ENCODE measurements at regions of chr12 and their contacts with region 1.

Region 1: DNA sequence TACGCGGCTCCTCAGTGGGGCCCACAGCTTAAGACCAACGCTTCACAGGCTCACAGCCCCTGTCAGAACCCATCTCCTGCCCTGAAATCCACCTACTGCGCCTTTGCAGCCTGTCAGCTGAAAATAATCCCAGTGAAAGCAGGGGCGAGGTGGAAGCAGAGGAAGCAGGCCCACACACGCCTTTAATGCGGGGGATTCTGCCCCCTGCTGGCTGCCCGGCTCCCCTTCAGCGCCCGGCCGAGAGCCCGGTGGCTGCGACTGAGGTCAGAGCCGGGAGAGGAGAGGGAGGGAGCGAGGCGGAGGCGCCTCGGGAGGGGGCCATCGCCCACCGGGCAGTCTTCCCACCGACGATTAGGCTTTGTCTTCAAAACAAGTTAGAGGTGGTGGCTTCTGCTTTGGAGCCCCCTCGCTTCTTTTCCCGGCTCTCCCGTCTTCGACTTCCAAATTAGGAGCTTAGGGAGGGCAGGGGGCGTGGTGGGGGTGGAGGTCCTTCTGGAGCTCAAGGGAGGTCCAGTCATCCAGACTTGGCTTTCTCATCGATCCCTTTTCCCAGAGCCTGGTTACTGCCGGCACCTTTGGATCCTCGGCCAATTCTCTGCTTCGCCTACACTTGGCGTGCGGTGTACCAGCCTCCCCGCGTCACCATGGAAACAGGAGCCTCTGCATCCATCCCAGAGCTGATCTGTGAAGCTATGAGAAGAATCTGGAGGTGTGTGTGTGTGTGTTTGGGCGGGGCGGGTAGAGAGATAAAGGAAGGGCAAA is 25.2 kb upstream of the RND1 start:
- DNase-seq: peak; percentile 63 to 89 (median 76)
- H3K4me3 ChIP-seq: peak overlapping the region in 1 of 4 donors; percentile 24
- H3K27ac ChIP-seq: no peak overlapping the region
- H3K4me1 ChIP-seq: peaks cover 0 to 9% of the 10 kb centered on the region in 2 donors
- H3K27me3 ChIP-seq: peaks cover 6% of the 10 kb centered on the region
- CTCF ChIP-seq: peak; percentile 86 to 93 (median 88)
- POLR2A ChIP-seq: no peak

Region 2: DNA sequence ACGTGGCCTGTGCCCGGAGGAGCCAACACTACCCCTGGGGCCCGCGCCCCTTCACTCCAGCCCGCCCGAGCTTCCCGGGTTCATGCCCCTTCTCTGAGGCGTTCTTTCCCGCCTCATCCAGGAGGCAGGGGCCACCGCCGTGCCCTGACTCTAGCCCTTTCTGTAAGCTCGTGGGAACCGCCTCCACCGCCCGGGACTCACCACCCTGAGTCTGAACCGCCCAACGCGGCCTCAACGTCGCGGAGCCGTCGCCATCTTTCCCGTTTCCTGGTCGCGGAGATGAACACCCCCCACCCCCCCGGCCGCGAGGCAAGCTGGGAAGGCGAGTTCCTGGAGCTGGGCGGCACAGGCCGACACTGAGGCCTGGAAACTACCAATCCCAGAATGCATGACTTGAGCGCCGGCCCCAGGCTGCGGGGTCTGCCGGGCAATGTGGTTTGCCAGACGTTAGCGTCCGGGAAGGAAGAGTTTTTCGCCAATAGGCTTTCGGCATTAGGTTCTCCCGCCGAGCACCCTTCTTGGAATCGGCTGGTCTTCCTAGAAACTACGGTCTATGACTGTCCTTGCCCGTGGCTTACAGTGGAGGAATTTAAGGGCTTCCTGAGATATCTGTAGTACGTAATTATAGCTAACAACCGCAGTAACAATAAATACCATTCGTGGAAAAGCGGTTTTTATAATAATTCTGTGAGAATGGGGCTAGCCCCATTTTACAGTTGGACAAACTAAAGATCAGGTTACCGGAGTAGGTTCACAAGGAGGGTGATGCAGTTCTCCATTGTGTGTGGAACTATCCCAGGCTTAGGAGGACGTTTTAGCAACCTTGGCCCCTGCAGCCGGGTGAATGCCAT is 38.7 kb before region 1 on chr12 and contains the start of gene DDX23:
- intact Hi-C with region 1: loop called (anchors 1 to 5 kb)
- DNase-seq: peak; percentile 93 to 97 (median 97)
- H3K4me3 ChIP-seq: peak within 1 kb of the TSS in 3 of 4 donors; percentile 46 to 85 (median 84)
- H3K27ac ChIP-seq: peak within 1 kb of the TSS; percentile 39 to 88 (median 71)
- H3K4me1 ChIP-seq: peaks cover 13 to 17% of the 10 kb centered on the region in 2 donors
- H3K27me3 ChIP-seq: no peaks in the 10 kb centered on the region
- CTCF ChIP-seq: no peak
- POLR2A ChIP-seq: peak; percentile 30 to 50
- total RNA-seq, gene DDX23: 47.1 to 85.4 (median 68.2) TPM

Region 3: GRCh38 chr12:48857278-48857994 is 33.4 kb before region 1 on chr12:
- intact Hi-C with region 1: loop called (anchors 1 to 5 kb)
- DNase-seq: no peak
- H3K4me3 ChIP-seq: no peak overlapping the region
- H3K27ac ChIP-seq: no peak overlapping the region
- H3K4me1 ChIP-seq: peaks cover 5 to 6% of the 10 kb centered on the region in 2 donors
- H3K27me3 ChIP-seq: no peaks in the 10 kb centered on the region
- CTCF ChIP-seq: no peak
- POLR2A ChIP-seq: no peak

Measured in adrenal gland (tissue), 19 donors.